Naive thymus-derived CD4-positive, alpha-beta T cell (primary cell): ENCODE measurements at regions of chr18 and their contacts with region 1.

Region 1: DNA sequence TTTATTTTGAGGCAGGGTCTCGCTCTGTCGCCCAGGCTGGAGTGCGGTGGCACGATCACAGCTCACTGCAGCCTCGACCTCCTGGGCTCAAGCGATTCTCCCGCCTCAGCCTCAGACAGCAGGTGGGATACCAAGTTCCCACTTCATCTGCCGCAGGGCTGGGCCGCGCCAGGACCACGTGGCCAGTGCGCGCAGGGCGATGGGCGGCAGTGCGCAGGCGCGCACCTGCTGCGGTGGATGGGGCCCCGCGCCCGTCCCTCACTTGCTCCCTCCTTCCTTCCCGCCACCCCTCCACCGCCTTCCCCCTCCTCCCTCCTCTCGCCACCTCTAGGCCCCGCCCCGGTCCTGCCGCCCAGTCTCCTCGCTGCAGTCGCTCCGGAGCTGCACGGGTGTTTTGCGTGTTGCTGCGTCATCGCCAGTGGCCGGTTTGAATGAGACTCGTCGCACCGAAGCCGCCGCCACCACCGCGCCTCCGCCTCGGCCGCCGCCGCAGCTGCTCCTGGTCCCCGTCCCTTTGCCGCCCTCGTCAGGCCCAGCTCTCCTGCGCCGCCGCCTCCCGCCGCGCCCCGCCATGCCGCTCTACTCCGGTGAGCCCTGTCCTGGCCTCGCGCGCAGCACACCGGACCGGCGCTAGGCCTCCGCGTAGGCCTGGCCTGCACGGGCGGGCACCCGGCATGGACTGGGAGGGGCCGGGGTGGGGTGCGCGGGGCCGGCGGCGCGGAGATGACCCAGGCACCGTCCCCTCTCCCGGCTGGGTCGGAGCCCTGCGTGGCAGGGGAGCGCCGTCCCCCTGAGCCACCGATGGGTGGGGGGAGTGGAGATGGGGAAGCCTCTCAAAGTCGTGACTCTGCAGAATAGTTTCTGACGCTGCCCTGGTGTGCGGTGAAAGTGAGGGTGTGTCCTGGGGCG is at the start of gene USP14:
- DNase-seq: peak; percentile 83 to 97 (median 95)
- ATAC-seq: peak; percentile 97
- H3K4me3 ChIP-seq: peak within 1 kb of the TSS; percentile 38
- H3K4me3 Mint-ChIP-seq: peak within 1 kb of the TSS; percentile 85 to 99 (median 96)
- H3K27ac ChIP-seq: peak within 1 kb of the TSS; percentile 84
- H3K27ac Mint-ChIP-seq: peak within 1 kb of the TSS; percentile 80 to 98 (median 95)
- H3K4me1 ChIP-seq: peaks cover 4 to 15% of the 10 kb centered on the region in 2 donors
- H3K4me1 Mint-ChIP-seq: peaks cover 21 to 50% (median 35%) of the 10 kb centered on the region in 7 donors
- H3K27me3 ChIP-seq: no peaks in the 10 kb centered on the region
- H3K27me3 Mint-ChIP-seq: no peaks in the 10 kb centered on the region
- total RNA-seq, gene USP14: 39.2 to 70.6 (median 43.5) TPM

Region 2: DNA sequence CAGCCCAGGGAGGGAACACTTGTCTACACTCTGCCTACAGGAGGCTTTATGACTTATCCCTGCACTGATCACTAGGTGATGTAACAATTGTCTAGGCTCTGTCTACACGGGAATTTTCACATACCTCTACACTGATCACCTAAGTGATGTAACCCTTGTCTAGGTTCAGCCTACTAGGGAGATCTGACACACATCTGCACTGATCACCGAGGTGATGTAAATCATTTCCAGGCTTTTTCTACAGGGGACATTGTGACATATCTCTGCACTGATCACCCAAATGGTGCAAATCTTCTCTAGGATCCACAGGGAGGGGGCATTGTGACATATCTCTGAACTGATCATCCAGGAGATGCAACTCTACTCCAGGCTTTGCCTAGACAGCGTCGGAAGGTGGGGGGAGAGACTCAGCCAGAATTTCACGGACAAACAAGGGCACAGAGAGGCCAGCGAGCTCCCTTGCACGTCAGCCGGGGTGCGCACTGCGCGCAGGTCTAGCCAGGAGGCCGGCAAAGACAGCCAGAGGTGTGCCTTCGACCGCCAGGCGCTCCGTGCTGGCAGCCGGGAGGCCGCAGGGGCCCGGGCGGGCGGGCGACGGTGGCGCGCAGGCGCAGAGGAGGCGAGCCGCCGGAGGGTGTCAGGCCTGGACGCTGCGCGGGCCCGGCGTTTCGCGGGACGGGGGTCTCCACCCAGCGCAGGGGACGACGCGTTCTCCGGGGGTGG is 46.9 kb before region 1 on chr18:
- CTCF ChIA-PET with region 1: no interaction called
- POLR2A ChIA-PET with region 1: no interaction called
- intact Hi-C with region 1: loop called (anchors 1 to 2 kb)
- DNase-seq: peak; percentile 60 to 77 (median 75)
- ATAC-seq: no peak
- H3K4me3 ChIP-seq: peak overlapping the region; percentile 36
- H3K4me3 Mint-ChIP-seq: peak overlapping the region; percentile 79 to 91 (median 89)
- H3K27ac ChIP-seq: peak overlapping the region; percentile 82
- H3K27ac Mint-ChIP-seq: peak overlapping the region; percentile 85 to 99 (median 90)
- H3K4me1 ChIP-seq: peaks cover 0 to 5% of the 10 kb centered on the region in 2 donors
- H3K4me1 Mint-ChIP-seq: peaks cover 4 to 14% (median 7%) of the 10 kb centered on the region in 7 donors
- H3K27me3 ChIP-seq: no peaks in the 10 kb centered on the region
- H3K27me3 Mint-ChIP-seq: peaks cover 0 to 3% (median 0%) of the 10 kb centered on the region in 5 donors

Region 3: GRCh38 chr18:172361-172760 is 14.0 kb after region 1 on chr18:
- CTCF ChIA-PET with region 1: no interaction called
- POLR2A ChIA-PET with region 1: interaction called, 4 read pairs
- intact Hi-C with region 1: loop called in 1 of 2 experiments (anchors 2 kb)
- DNase-seq: no peak
- ATAC-seq: no peak
- H3K4me3 ChIP-seq: no peak overlapping the region
- H3K4me3 Mint-ChIP-seq: no peak overlapping the region
- H3K27ac ChIP-seq: no peak overlapping the region
- H3K27ac Mint-ChIP-seq: no peak overlapping the region
- H3K4me1 ChIP-seq: no peaks in the 10 kb centered on the region
- H3K4me1 Mint-ChIP-seq: peaks cover 9 to 32% (median 16%) of the 10 kb centered on the region in 7 donors
- H3K27me3 ChIP-seq: no peaks in the 10 kb centered on the region
- H3K27me3 Mint-ChIP-seq: no peaks in the 10 kb centered on the region

Region 4: DNA sequence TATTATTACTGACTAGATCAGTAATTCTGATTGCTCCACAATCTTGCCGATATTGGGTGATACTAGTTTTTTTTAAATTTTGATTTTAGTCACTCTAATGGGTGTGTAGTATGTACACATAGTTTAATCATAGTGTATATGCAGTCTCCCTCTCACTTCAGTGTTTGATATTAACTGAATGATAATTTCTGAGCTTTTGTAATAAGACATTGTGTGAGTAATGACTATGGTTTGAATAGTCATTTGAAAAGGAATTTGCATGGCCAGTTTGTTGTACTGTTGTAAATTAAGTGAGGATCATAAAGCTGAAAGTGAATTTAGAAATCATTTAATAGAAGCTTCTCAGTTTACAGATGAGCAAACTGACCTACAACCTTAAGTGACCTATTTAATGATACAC is 33.3 kb after region 1 on chr18:
- CTCF ChIA-PET with region 1: no interaction called
- POLR2A ChIA-PET with region 1: interaction called, 3 read pairs
- intact Hi-C with region 1: loop called in 1 of 2 experiments (anchors 5 kb)
- DNase-seq: no peak
- ATAC-seq: no peak
- H3K4me3 ChIP-seq: no peak overlapping the region
- H3K4me3 Mint-ChIP-seq: no peak overlapping the region
- H3K27ac ChIP-seq: no peak overlapping the region
- H3K27ac Mint-ChIP-seq: peak overlapping the region in 2 of 9 donors; percentile 12 to 36
- H3K4me1 ChIP-seq: no peaks in the 10 kb centered on the region
- H3K4me1 Mint-ChIP-seq: peaks cover 3 to 45% (median 29%) of the 10 kb centered on the region in 7 donors
- H3K27me3 ChIP-seq: no peaks in the 10 kb centered on the region
- H3K27me3 Mint-ChIP-seq: no peaks in the 10 kb centered on the region

Region 5: DNA sequence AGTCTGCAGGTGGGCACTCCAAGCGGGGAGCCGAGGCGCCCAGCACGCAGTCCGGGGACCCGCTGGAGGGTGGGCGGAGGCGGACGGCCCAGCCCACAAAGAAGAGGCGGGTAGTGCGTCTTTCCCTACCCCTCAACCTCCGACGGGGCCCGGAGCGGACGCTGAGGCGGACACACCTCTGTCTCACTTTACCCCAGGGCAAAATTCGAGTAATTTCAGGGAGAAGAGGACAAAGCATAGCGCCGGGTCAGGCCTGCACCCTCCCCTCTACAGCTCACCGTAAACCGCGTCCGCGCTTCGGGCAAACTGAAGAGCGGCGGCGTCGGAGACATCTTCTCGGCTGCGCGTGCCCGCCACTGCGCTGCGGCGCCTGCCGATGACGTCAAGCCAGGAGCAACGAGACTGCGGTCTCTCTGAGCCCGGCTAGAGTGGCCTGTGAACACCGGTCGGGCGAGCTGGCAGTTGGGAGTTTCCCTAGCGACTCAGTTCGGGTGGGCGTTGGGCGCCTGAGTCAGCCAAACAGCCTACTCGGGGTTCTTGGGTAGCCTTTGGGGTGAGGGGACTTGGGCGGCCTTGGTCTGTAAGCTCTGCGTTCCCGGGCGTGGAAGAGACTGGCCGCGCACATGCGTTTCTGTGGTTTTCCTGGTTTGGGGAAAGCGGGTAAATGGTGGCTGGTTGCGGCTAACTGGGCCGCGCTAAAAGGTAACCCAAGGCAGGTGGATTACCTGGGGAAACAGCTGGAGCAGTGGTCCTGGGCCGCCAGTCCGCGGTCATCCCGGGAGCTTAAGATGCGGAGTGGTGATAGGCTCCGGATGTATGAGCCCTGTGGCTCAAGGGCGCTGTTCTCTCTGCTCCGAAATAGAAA is 109.5 kb after region 1 on chr18 and contains the start of gene THOC1:
- CTCF ChIA-PET with region 1: no interaction called
- POLR2A ChIA-PET with region 1: interaction called, 31 read pairs
- intact Hi-C with region 1: loop called (anchors 1 kb)
- DNase-seq: peak; percentile 88 to 95 (median 93)
- ATAC-seq: peak; percentile 96
- H3K4me3 ChIP-seq: peak within 1 kb of the TSS; percentile 99
- H3K4me3 Mint-ChIP-seq: peak within 1 kb of the TSS; percentile 93 to 100 (median 98)
- H3K27ac ChIP-seq: peak within 1 kb of the TSS; percentile 98
- H3K27ac Mint-ChIP-seq: peak within 1 kb of the TSS; percentile 99 to 100 (median 100)
- H3K4me1 ChIP-seq: peaks cover 11 to 18% of the 10 kb centered on the region in 2 donors
- H3K4me1 Mint-ChIP-seq: peaks cover 19 to 51% (median 38%) of the 10 kb centered on the region in 7 donors
- H3K27me3 ChIP-seq: no peaks in the 10 kb centered on the region
- H3K27me3 Mint-ChIP-seq: no peaks in the 10 kb centered on the region
- total RNA-seq, gene THOC1: 56.7 to 93.7 (median 74.5) TPM

Region 6: GRCh38 chr18:596288-596881 is 438.0 kb after region 1 on chr18:
- CTCF ChIA-PET with region 1: no interaction called
- POLR2A ChIA-PET with region 1: no interaction called
- intact Hi-C with region 1: loop called in 1 of 2 experiments (anchors 2 kb)
- DNase-seq: peak in 1 of 9 donors; percentile 52
- ATAC-seq: peak; percentile 75
- H3K4me3 ChIP-seq: no peak overlapping the region
- H3K4me3 Mint-ChIP-seq: peak overlapping the region in 8 of 10 donors; percentile 55 to 64 (median 56)
- H3K27ac ChIP-seq: peak overlapping the region; percentile 33
- H3K27ac Mint-ChIP-seq: peak overlapping the region in 7 of 9 donors; percentile 8 to 83 (median 73)
- H3K4me1 ChIP-seq: peaks cover 4 to 5% of the 10 kb centered on the region in 2 donors
- H3K4me1 Mint-ChIP-seq: peaks cover 0 to 17% (median 12%) of the 10 kb centered on the region in 7 donors
- H3K27me3 ChIP-seq: peaks cover 0 to 5% of the 10 kb centered on the region in 2 donors
- H3K27me3 Mint-ChIP-seq: peaks cover 21 to 48% (median 34%) of the 10 kb centered on the region in 5 donors

Region 7: GRCh38 chr18:658001-658946 is 499.9 kb after region 1 on chr18:
- CTCF ChIA-PET with region 1: no interaction called
- POLR2A ChIA-PET with region 1: no interaction called
- intact Hi-C with region 1: loop called in 1 of 2 experiments (anchors 2 kb)
- DNase-seq: peak in 3 of 9 donors; percentile 20 to 78 (median 31)
- ATAC-seq: peak; percentile 68
- H3K4me3 ChIP-seq: peak overlapping the region; percentile 79
- H3K4me3 Mint-ChIP-seq: peak overlapping the region; percentile 81 to 96 (median 83)
- H3K27ac ChIP-seq: no peak overlapping the region
- H3K27ac Mint-ChIP-seq: peak overlapping the region in 1 of 9 donors; percentile 94
- H3K4me1 ChIP-seq: peaks cover 0 to 5% of the 10 kb centered on the region in 2 donors
- H3K4me1 Mint-ChIP-seq: peaks cover 0 to 50% (median 10%) of the 10 kb centered on the region in 7 donors
- H3K27me3 ChIP-seq: peaks cover 0 to 5% of the 10 kb centered on the region in 2 donors
- H3K27me3 Mint-ChIP-seq: peaks cover 0 to 43% (median 35%) of the 10 kb centered on the region in 5 donors

Region 8: GRCh38 chr18:789397-789796 is 631.0 kb after region 1 on chr18:
- CTCF ChIA-PET with region 1: no interaction called
- POLR2A ChIA-PET with region 1: no interaction called
- intact Hi-C with region 1: no loop called
- DNase-seq: no peak
- ATAC-seq: no peak
- H3K4me3 ChIP-seq: no peak overlapping the region
- H3K4me3 Mint-ChIP-seq: no peak overlapping the region
- H3K27ac ChIP-seq: no peak overlapping the region
- H3K27ac Mint-ChIP-seq: peak overlapping the region in 1 of 9 donors; percentile 37
- H3K4me1 ChIP-seq: peaks cover 0 to 8% of the 10 kb centered on the region in 2 donors
- H3K4me1 Mint-ChIP-seq: peaks cover 16 to 63% (median 44%) of the 10 kb centered on the region in 7 donors
- H3K27me3 ChIP-seq: no peaks in the 10 kb centered on the region
- H3K27me3 Mint-ChIP-seq: no peaks in the 10 kb centered on the region